GM12878 (cell line): ENCODE measurements at regions of chr10 and their contacts with region 1.

Region 1: DNA sequence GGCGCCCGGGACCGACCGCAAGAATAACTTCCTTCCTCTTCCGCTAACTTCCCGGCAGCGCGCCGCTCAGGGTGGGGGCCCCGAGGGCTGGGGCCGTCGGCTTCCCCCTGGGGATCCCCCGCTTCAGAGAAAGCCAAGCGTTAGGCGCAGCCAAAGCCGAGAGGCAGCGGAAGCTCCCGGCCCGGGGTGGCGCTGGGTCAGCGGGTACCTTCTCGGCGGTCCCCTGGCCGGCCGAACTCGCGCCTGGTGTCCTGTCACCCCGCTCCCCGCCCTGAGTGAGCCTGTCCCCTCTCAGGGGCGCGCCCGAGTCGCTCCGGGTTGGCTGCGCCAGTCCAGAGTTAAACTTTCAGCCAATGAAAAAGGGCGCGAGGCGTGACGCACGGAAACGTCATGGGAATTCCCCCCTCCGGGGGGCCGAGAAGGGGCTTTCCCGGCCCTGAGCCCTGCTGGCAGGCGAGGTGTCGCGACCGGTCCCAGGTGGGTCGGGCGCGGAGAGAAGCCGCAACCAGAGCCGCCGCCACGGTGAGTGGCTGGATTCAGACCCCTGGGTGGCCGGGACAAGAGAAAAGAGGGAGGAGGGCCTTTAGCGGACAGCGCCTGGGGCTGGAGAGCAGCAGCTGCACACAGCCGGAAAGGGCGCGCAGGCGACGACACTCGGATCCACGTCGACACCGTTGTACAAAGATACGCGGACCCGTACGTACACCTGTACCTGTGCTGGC is 1.3 kb upstream of the NFKB2 start:
- DNase-seq: peak; percentile 89
- ATAC-seq: peak; percentile 87
- H3K4me3 ChIP-seq: peak overlapping the region; percentile 100
- H3K27ac ChIP-seq: peak overlapping the region; percentile 93
- H3K4me1 ChIP-seq: peaks cover 17% of the 10 kb centered on the region
- H3K27me3 ChIP-seq: no peaks in the 10 kb centered on the region
- CTCF ChIP-seq: peak in 2 of 3 experiments; percentile 89 to 91; a peak in 2 of 6 replicates
- EP300 ChIP-seq: peak; percentile 21 to 50; a peak in 2 of 4 replicates
- POLR2A ChIP-seq: peak; percentile 85
- RAD21 ChIP-seq: peak; percentile 54

Region 2: DNA sequence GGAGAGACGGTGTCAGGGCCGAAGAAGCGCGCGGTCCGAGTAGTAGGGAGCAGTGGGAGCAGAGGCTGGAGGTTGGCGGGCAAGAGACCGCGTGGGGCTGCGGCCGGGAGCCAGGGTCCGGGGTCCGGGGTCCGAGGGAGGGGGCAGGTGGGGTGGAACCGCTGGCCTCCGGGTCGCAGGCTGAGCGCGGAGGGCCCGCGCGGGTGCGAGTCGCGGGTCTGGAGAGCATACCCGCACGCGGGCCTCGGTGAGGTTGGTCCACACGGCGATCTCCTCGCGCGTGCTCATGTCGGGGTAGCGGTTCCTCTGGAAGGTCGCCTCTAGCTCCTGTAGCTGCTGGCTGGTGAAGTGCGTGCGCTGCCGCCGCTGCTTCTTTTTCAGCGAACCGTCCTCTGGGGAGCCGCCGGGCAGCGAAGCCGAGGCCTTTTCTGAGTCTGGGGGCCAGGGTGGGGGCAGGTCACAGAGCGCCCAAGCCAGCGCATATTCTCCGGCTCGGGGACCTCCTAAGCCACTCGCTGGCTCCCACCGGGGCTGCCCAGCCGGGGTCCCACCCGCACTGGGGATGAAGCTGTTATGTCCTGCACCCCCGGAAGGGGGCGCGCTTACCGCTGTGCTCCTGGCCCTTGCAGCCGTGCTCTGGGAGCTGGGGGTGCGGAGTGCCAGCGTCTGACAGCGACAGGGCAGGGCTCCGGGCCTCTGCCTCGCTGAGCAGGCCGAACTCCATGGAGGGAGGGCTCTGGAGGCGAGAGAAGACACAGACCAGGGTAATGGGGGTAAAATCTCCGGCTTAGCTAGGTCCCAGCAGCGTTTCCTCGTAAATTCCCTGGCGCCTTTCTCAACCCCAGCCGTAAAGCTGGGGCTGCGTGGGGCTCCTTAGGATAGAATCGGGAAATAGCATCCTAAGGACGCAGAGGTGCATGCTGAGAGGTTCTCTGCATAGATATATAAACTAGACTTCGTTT is 162.6 kb before region 1 on chr10:
- CTCF ChIA-PET with region 1: interaction called, 69 read pairs
- POLR2A ChIA-PET with region 1: no interaction called
- RAD21 ChIA-PET with region 1: interaction called, 33 read pairs
- SMC1A ChIA-PET with region 1: interaction called, 15 read pairs
- in situ Hi-C with region 1: no loop called
- intact Hi-C with region 1: loop called (anchors 2 kb)
- DNase-seq: no peak
- ATAC-seq: peak; percentile 77
- H3K4me3 ChIP-seq: peak overlapping the region; percentile 64
- H3K27ac ChIP-seq: no peak overlapping the region
- H3K4me1 ChIP-seq: peaks cover 10% of the 10 kb centered on the region
- H3K27me3 ChIP-seq: peaks cover 5 to 11% of the 10 kb centered on the region in 2 experiments; a peak in 3 of 4 replicates
- CTCF ChIP-seq: peak; percentile 76 to 90 (median 80)
- EP300 ChIP-seq: no peak
- POLR2A ChIP-seq: no peak
- RAD21 ChIP-seq: peak; percentile 55; the same call in 1 of the 2 replicates

Region 3: GRCh38 chr10:102408728-102409603 is 14.7 kb after region 1 on chr10:
- CTCF ChIA-PET with region 1: interaction called, 20 read pairs
- POLR2A ChIA-PET with region 1: interaction called, 6 read pairs
- RAD21 ChIA-PET with region 1: interaction called, 4 read pairs
- SMC1A ChIA-PET with region 1: interaction called, 5 read pairs
- in situ Hi-C with region 1: no loop called
- intact Hi-C with region 1: no loop called
- DNase-seq: no peak
- ATAC-seq: 0 out of 3 replicates have a peak, but pooled peaks have one; percentile 8
- H3K4me3 ChIP-seq: peak overlapping the region; percentile 22; the same call in 1 of the 2 replicates
- H3K27ac ChIP-seq: no peak overlapping the region
- H3K4me1 ChIP-seq: peaks cover 9% of the 10 kb centered on the region
- H3K27me3 ChIP-seq: peaks cover 17 to 21% of the 10 kb centered on the region in 2 experiments
- CTCF ChIP-seq: no peak
- EP300 ChIP-seq: no peak
- POLR2A ChIP-seq: peak; percentile 50; the same call in 1 of the 2 replicates
- RAD21 ChIP-seq: no peak

Region 4: GRCh38 chr10:102432162-102432950 is 38.1 kb after region 1 on chr10 and contains the start of gene CUEDC2:
- CTCF ChIA-PET with region 1: interaction called, 15 read pairs
- POLR2A ChIA-PET with region 1: interaction called, 42 read pairs
- RAD21 ChIA-PET with region 1: interaction called, 4 read pairs
- SMC1A ChIA-PET with region 1: interaction called, 4 read pairs
- in situ Hi-C with region 1: no loop called
- intact Hi-C with region 1: no loop called
- DNase-seq: peak; percentile 88
- ATAC-seq: peak; percentile 95
- H3K4me3 ChIP-seq: peak within 1 kb of the TSS; percentile 93
- H3K27ac ChIP-seq: peak within 1 kb of the TSS; percentile 90
- H3K4me1 ChIP-seq: peaks cover 22% of the 10 kb centered on the region
- H3K27me3 ChIP-seq: no peaks in the 10 kb centered on the region
- CTCF ChIP-seq: no peak
- EP300 ChIP-seq: no peak; a peak in 1 of 4 replicates
- POLR2A ChIP-seq: peak; percentile 85
- RAD21 ChIP-seq: no peak
- polyA plus RNA-seq, gene CUEDC2: 20.4 to 45.2 TPM

Region 5: DNA sequence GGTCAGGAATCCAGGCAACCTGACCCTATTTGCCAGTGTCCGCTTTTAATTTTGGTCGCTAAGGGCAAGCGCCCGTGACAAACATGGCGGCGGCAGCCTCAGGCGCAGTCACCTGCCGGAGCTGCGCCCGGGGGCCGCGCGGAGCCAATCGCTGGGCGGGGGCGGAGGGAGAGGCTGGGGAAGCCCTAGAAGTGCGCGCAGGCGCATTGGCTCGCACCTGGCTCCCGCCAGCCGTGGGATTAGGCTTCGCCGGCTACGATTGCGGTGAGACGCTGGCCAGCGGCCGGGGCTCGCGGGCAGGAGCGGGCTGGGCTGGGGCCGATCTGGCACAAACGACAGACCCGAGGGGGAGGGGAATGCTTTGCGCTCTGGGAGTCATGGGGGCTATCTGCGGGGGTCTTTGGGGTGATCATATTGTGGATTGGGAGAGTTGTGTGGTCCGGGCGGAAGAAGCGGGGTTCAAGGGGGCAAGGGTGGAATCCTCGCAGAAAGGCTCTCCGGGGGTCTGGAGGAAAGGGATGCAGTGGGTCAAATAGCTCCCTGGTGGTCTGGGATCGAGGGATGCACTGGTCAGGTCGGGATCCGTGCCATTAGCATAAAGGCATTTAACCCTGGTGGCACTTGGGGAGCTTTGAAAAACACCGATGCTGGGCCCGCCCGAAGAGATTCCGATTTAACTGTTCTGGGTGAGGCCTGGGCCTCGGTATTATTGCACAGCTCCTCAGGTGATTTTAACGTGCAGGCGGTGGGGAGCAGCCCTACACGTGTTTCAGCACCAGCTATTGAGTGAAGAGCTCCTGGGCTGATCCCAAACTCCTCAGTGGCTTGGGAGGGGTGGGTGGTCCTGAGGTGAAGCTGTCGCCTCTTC is 67.2 kb after region 1 on chr10:
- CTCF ChIA-PET with region 1: interaction called, 7 read pairs
- POLR2A ChIA-PET with region 1: interaction called, 11 read pairs
- RAD21 ChIA-PET with region 1: interaction called, 5 read pairs
- SMC1A ChIA-PET with region 1: interaction called, 4 read pairs
- in situ Hi-C with region 1: no loop called
- intact Hi-C with region 1: loop called (anchors 5 kb)
- DNase-seq: peak; percentile 43
- ATAC-seq: peak; percentile 96
- H3K4me3 ChIP-seq: peak overlapping the region; percentile 73
- H3K27ac ChIP-seq: no peak overlapping the region
- H3K4me1 ChIP-seq: peaks cover 16% of the 10 kb centered on the region
- H3K27me3 ChIP-seq: no peaks in the 10 kb centered on the region
- CTCF ChIP-seq: no peak
- EP300 ChIP-seq: no peak
- POLR2A ChIP-seq: peak; percentile 53
- RAD21 ChIP-seq: no peak

Region 6: GRCh38 chr10:102503281-102504220 is 109.3 kb after region 1 on chr10 and contains the start of gene SUFU:
- CTCF ChIA-PET with region 1: interaction called, 3 read pairs
- POLR2A ChIA-PET with region 1: interaction called, 4 read pairs
- RAD21 ChIA-PET with region 1: interaction called, 4 read pairs
- SMC1A ChIA-PET with region 1: no interaction called
- in situ Hi-C with region 1: no loop called
- intact Hi-C with region 1: loop called (anchors 1 kb)
- DNase-seq: peak; percentile 93
- ATAC-seq: peak; percentile 82
- H3K4me3 ChIP-seq: peak within 1 kb of the TSS; percentile 88
- H3K27ac ChIP-seq: peak within 1 kb of the TSS; percentile 72; the same call in 1 of the 2 replicates
- H3K4me1 ChIP-seq: peaks cover 7% of the 10 kb centered on the region
- H3K27me3 ChIP-seq: no peaks in the 10 kb centered on the region
- CTCF ChIP-seq: peak; percentile 82 to 98 (median 89); a peak in 5 of 6 replicates
- EP300 ChIP-seq: no peak
- POLR2A ChIP-seq: peak; percentile 92
- RAD21 ChIP-seq: peak; percentile 88
- polyA plus RNA-seq, gene SUFU: 0.68 to 0.84 TPM

Region 7: GRCh38 chr10:102641880-102642735 is 247.9 kb after region 1 on chr10:
- CTCF ChIA-PET with region 1: no interaction called
- POLR2A ChIA-PET with region 1: interaction called, 4 read pairs
- RAD21 ChIA-PET with region 1: no interaction called
- SMC1A ChIA-PET with region 1: no interaction called
- in situ Hi-C with region 1: no loop called
- intact Hi-C with region 1: loop called (anchors 10 kb)
- DNase-seq: peak; percentile 90
- ATAC-seq: peak; percentile 69
- H3K4me3 ChIP-seq: peak overlapping the region; percentile 93
- H3K27ac ChIP-seq: peak overlapping the region; percentile 96
- H3K4me1 ChIP-seq: peaks cover 7% of the 10 kb centered on the region
- H3K27me3 ChIP-seq: no peaks in the 10 kb centered on the region
- CTCF ChIP-seq: no peak
- EP300 ChIP-seq: no peak
- POLR2A ChIP-seq: peak; percentile 91
- RAD21 ChIP-seq: no peak